ENCODE measurements at regions of chr2 and their contacts with region 1.

Region 1: GRCh38 chr2:241177526-241178334 is 10.7 kb upstream of the ANO7 start:
- DNase-seq: no peak
- ATAC-seq: no peak
- H3K4me3 Mint-ChIP-seq: no peak overlapping the region
- H3K27ac Mint-ChIP-seq: no peak overlapping the region
- H3K4me1 Mint-ChIP-seq: no peaks in the 10 kb centered on the region
- H3K27me3 Mint-ChIP-seq: no peaks in the 10 kb centered on the region
- CTCF ChIP-seq: no peak

Region 2: GRCh38 chr2:241309684-241310117 is 132.0 kb after region 1 on chr2:
- CTCF ChIA-PET with region 1: no interaction called
- POLR2A ChIA-PET with region 1: interaction called, 12 read pairs
- intact Hi-C with region 1: no loop called
- DNase-seq: peak; percentile 51
- ATAC-seq: peak; percentile 85
- H3K4me3 Mint-ChIP-seq: peak overlapping the region; percentile 68
- H3K27ac Mint-ChIP-seq: peak overlapping the region; percentile 85
- H3K4me1 Mint-ChIP-seq: peaks cover 75% of the 10 kb centered on the region
- H3K27me3 Mint-ChIP-seq: no peaks in the 10 kb centered on the region
- CTCF ChIP-seq: no peak